GM10248 (cell line): ENCODE measurements at regions of chr1 and their contacts with region 1.

Region 1: GRCh38 chr1:25099343-25099951 is 132.9 kb downstream of the SYF2 start:
- DNase-seq: no peak
- CTCF ChIP-seq: no peak

Region 2: DNA sequence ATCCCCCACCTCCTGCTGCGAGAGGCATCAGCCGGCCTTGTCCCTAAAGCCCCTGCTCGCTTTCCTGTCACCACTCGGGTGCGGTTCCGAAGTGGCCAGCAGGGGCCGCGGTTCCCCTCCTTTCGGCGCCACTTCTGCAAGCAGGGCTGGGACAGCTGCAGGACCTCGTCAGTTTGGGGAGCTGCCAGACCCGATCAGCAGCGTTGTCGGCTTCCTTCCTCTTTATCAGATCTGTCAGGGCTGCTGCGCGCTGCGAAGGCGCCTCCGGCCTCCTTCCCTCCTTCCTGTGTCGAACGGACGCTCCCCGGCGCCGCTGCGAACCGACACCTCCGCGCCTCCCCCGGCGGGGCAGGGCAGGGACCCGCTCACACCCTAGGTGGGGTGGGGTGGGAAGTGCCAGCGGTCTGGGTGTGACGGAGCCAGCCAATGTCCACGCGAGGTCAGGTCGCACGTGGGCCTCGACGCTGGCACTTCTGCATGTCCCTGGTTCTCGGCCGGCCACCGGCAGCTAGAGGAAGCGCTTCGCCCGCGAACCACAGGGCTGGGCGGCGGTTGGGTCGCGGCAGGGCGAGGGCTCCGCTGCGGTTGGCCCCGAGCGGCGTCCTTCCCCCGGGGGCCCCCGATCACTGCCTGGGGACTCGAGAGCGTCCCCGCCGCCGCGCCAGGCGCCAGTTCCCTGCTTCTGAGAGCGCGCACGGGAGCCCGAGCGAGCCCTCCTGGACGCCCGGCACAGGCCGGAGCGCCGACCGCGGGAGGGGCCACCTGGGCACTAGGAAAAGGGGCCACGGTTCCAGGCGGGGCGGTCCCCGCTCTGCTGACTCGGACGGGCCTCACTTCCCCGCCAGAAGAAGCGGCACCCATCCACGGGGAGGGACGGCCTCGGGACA is 251.2 kb before region 1 on chr1:
- CTCF ChIA-PET with region 1: interaction called, 18 read pairs
- POLR2A ChIA-PET with region 1: no interaction called
- DNase-seq: peak; percentile 89
- CTCF ChIP-seq: peak; percentile 96

Region 3: DNA sequence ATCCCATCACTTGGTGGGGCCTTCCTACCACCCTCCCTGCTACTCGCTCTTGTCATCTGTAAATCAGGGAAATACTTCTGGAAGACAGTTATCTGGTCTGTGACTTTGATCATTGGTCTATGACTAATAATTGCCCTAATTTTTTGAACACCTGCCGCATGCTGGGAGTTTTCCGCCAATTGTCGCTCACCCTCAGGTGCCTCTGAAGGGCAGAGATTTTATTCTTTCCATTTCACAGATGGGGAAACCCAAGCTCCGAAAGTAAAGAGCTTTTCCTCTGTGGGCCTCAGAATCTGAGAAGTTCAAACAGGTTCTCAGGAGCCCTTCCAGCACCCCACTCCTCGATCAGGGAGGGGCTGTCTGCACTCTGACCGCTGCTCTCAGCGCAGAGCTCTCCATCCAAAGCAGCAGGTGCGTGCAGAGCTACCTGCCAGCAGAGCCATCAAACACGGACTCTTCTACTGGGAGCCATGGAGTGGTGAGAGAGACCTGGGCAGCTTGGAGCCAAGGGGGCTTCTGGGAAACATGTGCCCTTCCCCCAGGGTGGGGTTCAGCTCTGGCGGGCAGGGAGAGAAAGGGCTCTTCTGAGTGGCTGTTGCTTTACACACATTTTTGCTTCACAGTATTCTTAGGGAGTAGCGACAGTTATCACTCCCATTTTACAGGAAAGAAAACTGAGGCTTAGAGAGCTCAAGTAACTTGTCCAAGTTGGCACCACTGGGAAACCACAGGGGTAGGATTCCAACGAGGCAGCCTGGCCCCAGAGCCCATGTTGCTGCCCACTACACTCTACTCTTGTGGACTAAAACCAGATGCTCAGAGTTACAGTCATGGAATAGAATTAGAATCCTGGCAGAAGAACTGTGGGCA is 163.6 kb before region 1 on chr1:
- CTCF ChIA-PET with region 1: interaction called, 15 read pairs
- POLR2A ChIA-PET with region 1: no interaction called
- DNase-seq: peak; percentile 71
- CTCF ChIP-seq: no peak

Region 4: DNA sequence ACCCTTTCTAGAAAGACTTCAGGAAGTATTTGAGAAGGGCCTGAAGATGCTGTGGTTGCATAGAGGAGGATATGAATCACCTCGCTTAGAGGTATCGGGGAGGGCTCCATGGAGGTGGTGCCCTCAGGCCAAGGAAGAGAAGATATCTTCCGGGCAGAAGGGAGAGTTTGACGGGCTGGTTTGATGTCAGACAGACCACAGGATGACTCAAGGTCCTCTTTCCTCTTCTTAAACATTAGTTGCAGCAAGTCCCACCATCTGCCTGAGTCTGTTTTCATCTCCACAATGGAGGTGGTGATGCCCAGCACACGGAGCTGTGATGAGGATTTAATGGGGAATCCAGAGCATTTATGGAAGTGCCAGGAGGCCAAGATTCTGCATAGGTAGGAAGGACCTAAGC is 144.3 kb before region 1 on chr1:
- CTCF ChIA-PET with region 1: interaction called, 12 read pairs
- POLR2A ChIA-PET with region 1: no interaction called
- DNase-seq: peak; percentile 62
- CTCF ChIP-seq: no peak

Region 5: DNA sequence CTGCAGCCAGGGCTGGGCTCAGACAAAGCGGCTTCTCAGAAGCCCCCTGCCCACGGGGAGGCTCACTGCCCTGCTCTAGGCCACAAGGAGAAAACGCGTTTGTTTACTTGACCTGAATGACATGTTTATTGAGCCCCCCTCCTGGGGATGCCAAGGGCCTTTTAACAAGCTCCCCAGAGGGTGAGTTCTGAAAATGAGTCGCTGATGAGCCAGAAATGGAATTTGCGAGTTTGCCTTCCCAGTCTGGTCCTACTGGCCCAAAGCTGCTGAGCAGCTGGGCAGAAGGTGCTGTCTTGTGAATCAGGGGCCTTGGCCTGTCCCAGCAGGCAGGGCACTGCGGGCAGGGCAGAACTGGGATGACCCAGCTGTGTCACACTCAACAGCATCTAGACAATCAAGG is 12.3 kb after region 1 on chr1:
- CTCF ChIA-PET with region 1: interaction called, 13 read pairs
- POLR2A ChIA-PET with region 1: no interaction called
- DNase-seq: no peak
- CTCF ChIP-seq: no peak

Region 6: DNA sequence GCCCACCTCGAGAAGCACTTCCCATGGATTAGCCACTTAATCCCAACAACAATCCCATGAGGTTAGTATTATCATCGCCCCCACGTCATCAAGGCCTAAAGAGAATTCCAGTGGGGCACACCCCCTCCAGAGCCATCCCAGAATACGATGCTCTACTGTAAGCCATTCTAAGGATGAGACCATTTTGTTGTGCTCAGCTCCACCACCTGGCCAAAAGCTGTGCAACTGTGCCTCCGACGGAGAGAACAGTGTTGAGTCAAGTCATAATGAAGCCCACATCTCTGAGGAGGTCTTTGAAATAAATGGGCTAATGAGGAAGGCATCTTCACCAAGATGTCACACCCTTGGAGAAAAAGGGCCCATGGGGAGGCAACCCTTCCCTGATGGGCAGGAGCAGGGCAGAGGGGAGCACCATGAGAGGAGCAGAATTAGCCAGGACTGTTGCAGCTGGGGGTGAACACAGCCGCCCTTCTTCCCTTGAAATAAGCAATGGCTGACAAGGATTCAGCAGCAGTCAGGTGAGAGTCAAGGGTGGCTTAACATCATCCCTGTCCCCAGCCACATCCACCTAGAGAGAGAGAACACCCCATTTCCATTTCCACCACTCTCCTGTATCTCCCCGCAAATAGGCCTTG is 118.3 kb after region 1 on chr1:
- CTCF ChIA-PET with region 1: no interaction called
- POLR2A ChIA-PET with region 1: no interaction called
- DNase-seq: no peak
- CTCF ChIP-seq: no peak